ENCODE measurements at regions of chr12 and their contacts with region 1.

Region 1: DNA sequence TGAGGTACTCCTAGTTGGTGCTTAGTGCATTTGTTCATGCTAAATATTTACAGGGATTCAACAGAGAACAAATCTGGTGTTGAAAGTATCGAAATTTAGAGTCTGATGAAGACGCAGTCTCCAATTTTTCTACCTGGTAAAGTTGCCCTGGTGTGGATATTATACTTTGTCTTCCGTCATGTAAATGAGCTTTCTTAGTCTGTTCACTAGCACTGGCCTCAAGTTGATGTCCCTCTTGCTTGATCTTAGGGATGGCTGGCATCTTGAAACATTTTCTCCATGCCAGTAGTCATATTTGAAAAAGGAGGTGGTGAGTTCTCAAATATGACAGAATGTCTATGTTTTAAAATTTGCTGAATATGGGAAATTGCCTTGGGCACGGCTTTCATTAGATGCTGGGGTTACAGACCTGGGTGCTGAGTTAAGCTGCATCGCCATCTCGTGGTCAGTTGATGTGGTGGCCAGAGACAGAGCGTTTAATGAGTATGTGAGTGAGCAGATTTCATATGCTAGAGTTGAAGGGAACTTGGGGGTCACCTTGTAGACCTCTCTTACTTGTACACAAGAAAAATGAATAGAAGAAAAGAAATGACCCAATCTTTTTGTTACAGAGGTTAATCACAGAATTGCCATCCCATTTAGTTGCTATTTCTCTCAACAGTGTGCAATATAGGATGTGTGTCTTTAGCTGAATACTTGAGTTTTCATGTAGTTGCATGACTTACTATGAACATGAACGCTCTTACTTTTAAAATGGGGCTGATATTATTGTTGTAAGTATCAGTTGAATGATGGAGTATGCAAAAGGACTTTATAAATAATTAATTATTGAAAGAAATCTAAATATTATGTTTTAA is 172.8 kb upstream of the DCN start:
- DNase-seq: peak; percentile 44 to 55
- H3K4me3 ChIP-seq: no peak overlapping the region
- H3K27ac ChIP-seq: no peak overlapping the region
- H3K4me1 ChIP-seq: no peaks in the 10 kb centered on the region; the same call in 1 of the 2 replicates
- H3K27me3 ChIP-seq: no peaks in the 10 kb centered on the region
- CTCF ChIP-seq: peak; percentile 86

Region 2: DNA sequence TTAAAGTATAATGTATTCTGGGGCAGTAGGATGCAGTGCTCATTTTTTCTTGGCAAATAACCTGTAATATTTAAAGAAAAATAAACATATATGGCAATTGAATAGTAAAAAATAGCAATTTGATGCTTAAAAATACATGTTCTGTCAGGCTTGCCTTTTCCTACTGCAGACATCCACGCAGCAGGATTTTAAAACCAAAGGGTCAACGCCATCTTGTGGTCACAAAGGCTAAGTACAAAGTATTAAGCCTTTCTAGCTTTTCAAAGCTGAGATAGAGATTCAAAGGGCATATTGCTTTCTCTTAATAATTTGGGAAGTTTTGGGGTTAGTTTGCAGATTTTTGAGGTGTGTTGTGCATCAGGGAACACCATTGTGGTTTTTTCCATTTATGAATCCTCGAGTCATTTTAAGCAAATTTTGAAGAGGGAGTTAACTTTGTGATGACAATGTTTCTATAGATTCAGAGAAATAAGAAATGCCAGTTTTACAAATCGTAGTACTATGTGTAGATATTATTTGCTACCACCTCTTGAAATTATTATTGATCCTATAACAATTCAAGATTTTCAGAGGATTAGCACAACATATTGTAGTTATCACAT is 395.7 kb before region 1 on chr12:
- CTCF ChIA-PET with region 1: no interaction called
- POLR2A ChIA-PET with region 1: no interaction called
- intact Hi-C with region 1: loop called (anchors 1 kb)
- DNase-seq: peak in 1 of 2 experiments; percentile 6
- H3K4me3 ChIP-seq: no peak overlapping the region
- H3K27ac ChIP-seq: no peak overlapping the region
- H3K4me1 ChIP-seq: no peaks in the 10 kb centered on the region
- H3K27me3 ChIP-seq: no peaks in the 10 kb centered on the region
- CTCF ChIP-seq: peak; percentile 67

Region 3: DNA sequence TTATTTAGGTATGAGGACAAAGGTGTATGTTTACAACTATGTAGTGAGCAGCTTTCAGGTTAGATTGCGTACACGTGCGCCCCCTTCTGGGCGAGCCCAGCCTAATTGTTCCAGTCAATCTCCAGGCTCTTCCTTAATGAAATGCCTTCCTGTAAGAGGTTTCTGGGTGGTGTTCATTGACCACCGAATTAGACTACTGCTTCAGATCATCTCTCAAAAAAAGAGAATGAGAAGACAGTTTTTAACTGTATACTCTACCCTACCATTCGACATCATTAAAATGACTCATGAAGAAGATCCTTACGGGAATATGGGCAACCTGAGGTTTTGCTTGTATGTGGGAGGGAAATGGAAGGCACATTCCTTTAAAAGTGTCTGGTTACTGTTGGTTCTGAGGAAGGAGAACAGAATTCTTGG is 246.2 kb before region 1 on chr12:
- CTCF ChIA-PET with region 1: no interaction called
- POLR2A ChIA-PET with region 1: no interaction called
- intact Hi-C with region 1: loop called (anchors 10 kb)
- DNase-seq: peak in 1 of 2 experiments; percentile 59
- H3K4me3 ChIP-seq: no peak overlapping the region
- H3K27ac ChIP-seq: no peak overlapping the region
- H3K4me1 ChIP-seq: no peaks in the 10 kb centered on the region
- H3K27me3 ChIP-seq: no peaks in the 10 kb centered on the region
- CTCF ChIP-seq: peak; percentile 85

Region 4: DNA sequence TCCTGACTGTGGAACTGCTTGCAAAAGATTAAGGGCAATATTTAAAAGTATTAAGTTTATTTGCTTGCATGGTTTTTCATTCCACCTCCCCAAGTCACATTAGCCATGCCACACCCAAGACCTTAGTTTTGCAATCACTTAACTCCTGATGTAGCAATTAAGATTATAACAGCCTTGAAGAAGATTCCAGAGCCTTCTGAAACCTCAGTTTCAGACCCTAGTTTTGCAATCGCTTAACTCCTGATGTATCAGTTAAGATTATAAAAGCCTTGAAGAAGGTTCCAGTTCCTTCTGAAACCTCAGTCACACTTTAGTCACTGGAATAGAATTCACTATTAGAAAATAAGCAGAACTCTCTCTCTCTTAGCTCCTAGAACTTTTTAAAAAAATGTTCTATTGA is 130.1 kb before region 1 on chr12:
- CTCF ChIA-PET with region 1: no interaction called
- POLR2A ChIA-PET with region 1: no interaction called
- intact Hi-C with region 1: no loop called
- DNase-seq: no peak
- H3K4me3 ChIP-seq: no peak overlapping the region
- H3K27ac ChIP-seq: no peak overlapping the region
- H3K4me1 ChIP-seq: no peaks in the 10 kb centered on the region
- H3K27me3 ChIP-seq: no peaks in the 10 kb centered on the region
- CTCF ChIP-seq: no peak

Region 5: DNA sequence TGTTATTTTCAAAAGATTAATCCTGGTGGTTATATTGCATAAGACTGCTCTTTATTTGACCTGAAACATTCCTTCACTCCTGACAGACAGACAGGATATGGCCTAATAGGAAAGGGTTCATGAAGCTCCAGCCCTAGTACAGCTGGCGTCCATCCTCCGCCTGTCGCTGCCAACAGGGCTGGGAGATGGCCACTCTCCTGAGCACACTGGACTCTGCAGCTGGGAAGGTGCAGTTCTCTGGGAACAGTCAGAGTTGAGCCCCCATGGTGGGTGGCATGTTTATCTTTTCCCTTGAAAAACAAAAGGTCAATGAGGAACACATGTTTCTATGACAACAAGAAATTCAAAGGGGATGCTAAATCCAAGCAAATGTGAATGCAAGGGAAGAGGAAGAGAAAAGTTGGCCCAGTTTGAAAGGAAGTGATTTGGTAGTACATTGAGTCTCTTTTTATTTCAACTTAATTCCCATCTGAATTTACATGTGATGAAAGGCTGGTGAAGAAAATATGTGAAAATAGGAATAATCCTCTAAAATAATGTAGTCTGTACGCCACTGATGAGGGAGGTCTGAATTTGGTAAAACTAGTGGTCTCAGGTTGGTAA is 82.8 kb before region 1 on chr12:
- CTCF ChIA-PET with region 1: no interaction called
- POLR2A ChIA-PET with region 1: no interaction called
- intact Hi-C with region 1: no loop called
- DNase-seq: no peak
- H3K4me3 ChIP-seq: no peak overlapping the region
- H3K27ac ChIP-seq: no peak overlapping the region
- H3K4me1 ChIP-seq: no peaks in the 10 kb centered on the region
- H3K27me3 ChIP-seq: no peaks in the 10 kb centered on the region
- CTCF ChIP-seq: no peak

Measured in PC-9 (cell line).